ENCODE measurements at regions of chr2 and their contacts with region 1.

Region 1: DNA sequence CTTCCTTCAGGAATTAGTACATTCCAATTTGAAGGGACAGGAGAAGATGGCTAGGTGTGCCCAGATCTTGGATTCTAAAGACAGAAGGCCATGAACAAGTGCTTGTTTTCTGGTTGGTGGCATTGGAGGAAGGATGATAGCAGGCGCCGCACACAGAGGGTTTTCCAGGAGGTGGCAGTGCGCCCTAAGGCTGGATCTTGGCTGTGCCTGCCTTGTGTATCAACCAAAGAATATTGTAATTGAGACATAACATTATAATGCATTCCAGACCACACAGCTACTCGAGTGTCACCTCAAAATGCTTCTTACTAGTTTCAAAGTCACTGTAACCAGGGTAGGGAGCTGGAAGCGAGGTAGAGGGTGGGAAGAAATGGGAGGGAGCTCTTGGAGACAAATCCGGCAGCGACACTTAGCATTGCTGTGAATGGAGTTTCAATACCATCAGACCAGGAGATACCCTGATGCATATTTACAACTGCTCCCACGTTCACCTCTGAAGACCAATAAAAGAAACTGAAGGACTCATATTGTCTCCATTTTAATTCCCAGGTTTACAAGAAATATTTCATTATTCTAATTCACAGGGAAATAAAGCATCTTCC is 42.5 kb downstream of the CPO start:
- DNase-seq: peak; percentile 78 to 98 (median 88)

Region 2: GRCh38 chr2:206693399-206694137 is 288.3 kb before region 1 on chr2:
- intact Hi-C with region 1: loop called (anchors 5 kb)
- DNase-seq: peak in 1 of 10 donors; percentile 12

Region 3: GRCh38 chr2:206800506-206801417 is 181.1 kb before region 1 on chr2:
- intact Hi-C with region 1: loop called (anchors 5 kb)
- DNase-seq: peak; percentile 59 to 95 (median 71)

Region 4: GRCh38 chr2:207041279-207041678 is 59.4 kb after region 1 on chr2:
- intact Hi-C with region 1: loop called (anchors 5 kb)
- DNase-seq: no peak

Region 5: DNA sequence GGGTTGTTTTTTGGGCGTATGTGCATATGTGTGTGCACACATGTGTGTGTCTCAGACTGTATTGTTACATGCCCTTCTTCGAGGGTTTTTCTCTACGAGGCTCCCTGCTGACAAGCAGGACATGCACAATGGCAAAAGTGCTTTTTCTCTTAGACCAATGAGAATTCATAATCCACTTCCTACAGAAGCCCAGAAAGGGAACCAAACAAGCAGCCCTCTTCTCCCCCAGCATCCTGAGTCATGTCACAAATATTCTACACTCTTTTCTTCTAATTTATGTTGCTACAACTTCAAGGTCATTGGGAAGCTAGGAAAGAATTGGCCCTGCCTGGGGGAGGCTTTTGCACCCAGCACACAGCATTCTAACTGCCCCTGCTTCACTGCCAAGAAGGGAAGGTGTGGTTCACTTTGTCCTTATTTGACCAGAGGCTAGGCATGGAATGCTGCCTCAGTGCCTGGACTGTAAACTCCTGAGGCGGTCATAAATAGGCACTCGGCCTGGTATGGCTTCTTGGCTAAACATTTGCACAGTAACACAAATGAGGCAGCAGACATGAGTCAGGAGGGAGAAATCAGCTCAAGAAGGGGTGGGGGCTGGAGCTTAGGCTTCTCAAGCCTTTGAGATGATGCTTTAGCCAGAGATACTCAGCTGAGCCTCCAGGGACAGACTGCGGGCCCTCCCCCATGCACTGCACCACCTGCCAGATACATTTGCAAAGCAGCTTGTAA is 276.6 kb after region 1 on chr2:
- intact Hi-C with region 1: loop called (anchors 10 kb)
- DNase-seq: peak in 6 of 10 donors; percentile 29 to 91 (median 66)

Measured in posterior cingulate gyrus (tissue), 11 donors.